GM10248 (cell line): ENCODE measurements at regions of chr1 and their contacts with region 1.

Region 1: DNA sequence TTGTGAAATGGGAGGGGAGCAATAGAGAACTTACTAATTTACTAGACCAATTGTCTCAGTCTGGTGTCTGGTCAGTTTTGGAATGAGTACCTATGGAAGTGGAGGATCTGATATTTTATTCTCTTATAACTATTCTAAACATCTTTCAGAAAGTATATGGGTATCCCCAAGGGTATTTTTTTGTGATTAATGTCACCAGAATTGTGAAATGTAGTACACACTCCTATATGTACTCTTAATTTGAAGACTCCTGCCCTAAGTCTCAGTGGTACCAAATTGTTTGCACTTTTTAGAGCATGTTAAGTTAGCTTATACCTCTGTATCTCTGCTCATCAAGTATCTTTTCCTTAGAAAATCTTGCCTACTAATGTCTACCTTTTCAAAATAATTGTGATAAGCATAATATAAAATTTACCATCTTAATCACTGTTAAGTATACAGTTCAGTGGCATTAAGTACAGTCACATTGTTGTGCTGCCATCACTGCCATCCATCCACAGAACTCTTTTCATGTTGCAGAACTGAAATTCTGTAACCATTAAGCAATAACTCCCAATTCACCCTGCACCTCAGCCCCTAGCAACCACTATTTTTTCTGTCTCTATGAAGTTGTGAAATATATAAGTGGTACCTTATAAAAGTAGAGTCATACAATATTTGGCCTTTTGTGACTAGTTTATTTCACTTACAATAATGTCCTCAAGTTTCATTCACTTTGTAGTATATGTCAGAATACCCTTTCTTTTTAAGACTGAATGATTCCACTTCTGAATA is 40.5 kb downstream of the SLC30A7 start:
- DNase-seq: no peak
- CTCF ChIP-seq: no peak

Region 2: DNA sequence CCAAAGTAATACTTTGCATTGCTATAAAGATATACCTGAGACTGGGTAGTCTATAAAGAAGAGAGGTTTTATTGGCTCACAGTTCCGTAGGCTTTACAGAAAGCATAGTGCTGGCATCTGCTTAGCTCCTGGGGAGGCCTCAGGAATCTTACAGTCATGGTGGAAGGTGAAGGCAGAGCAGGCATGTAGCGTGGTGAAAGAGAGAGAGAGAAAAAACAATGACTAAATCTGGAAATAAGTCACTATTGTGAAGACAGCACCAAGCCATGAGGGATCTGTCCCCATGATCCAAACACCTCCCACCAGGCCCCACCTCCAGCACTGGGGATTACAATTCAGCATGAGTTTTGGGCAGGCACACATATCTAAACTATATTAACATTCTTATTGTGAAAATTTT is 10.1 kb before region 1 on chr1:
- CTCF ChIA-PET with region 1: no interaction called
- POLR2A ChIA-PET with region 1: no interaction called
- DNase-seq: no peak
- CTCF ChIP-seq: no peak

Region 3: GRCh38 chr1:100950781-100951180 is 14.4 kb after region 1 on chr1:
- CTCF ChIA-PET with region 1: interaction called, 10 read pairs
- POLR2A ChIA-PET with region 1: no interaction called
- DNase-seq: no peak
- CTCF ChIP-seq: no peak